ENCODE measurements at regions of chr20 and their contacts with region 1.

Region 1: DNA sequence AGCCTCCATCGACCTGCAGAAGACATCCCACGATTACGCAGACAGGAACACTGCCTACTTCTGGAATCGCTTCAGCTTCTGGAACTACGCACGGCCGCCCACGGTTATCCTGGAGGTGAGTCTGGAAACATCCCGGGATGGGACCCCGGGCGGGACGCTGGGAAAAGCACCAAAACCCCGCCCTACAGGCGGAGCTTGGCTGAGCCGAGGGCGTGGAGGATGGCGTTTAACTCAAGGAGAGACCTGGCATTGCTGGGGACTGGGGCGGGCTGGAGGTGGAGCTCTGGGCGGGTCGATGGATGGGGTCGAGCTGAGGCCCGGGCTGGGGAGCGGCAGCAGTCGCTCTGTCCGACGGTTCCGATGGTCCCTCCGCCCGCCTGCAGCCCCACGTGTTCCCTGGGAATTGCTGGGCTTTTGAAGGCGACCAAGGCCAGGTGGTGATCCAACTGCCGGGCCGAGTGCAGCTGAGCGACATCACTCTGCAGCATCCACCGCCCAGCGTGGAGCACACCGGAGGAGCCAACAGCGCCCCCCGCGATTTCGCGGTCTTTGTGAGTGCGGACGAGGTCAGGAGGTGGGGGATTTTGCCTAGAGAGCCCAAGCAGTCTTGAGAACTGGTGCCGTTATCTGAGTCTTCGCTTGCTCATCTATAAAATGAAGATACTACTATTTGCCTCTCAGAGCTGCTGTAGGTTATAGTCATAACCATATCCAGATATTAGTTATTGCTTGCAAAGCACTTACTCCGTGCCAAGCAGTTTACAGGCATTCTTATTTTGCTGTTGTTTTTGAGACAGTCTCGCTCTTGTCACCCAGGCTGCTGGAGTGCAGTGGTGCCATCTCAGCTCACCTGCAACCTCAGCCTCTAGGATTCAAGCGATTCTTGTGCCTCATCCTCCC is 3.8 kb downstream of the SPAG4 start:
- DNase-seq: peak in 1 of 4 experiments; percentile 41
- ATAC-seq: no peak
- H3K4me3 ChIP-seq: no peak overlapping the region
- H3K27ac ChIP-seq: no peak overlapping the region
- H3K4me1 ChIP-seq: peaks cover 7 to 39% of the 10 kb centered on the region in 2 experiments; a peak in 4 of 5 replicates
- H3K27me3 ChIP-seq: no peaks in the 10 kb centered on the region
- CTCF ChIP-seq: peak; percentile 20 to 41 (median 31); a peak in 3 of 6 replicates
- EP300 ChIP-seq: no peak
- POLR2A ChIP-seq: no peak
- RAD21 ChIP-seq: no peak

Region 2: GRCh38 chr20:35092524-35093266 is 526.8 kb before region 1 on chr20 and contains the start of gene TRPC4AP:
- CTCF ChIA-PET with region 1: no interaction called
- POLR2A ChIA-PET with region 1: no interaction called
- in situ Hi-C with region 1: no loop called
- intact Hi-C with region 1: no loop called
- DNase-seq: peak; percentile 88 to 94 (median 88)
- ATAC-seq: peak; percentile 92
- H3K4me3 ChIP-seq: peak within 1 kb of the TSS; percentile 92
- H3K27ac ChIP-seq: peak within 1 kb of the TSS; percentile 93
- H3K4me1 ChIP-seq: peaks cover 15 to 18% of the 10 kb centered on the region in 2 experiments
- H3K27me3 ChIP-seq: no peaks in the 10 kb centered on the region
- CTCF ChIP-seq: peak; percentile 91 to 98 (median 96)
- EP300 ChIP-seq: peak; percentile 55
- POLR2A ChIP-seq: peak; percentile 88
- RAD21 ChIP-seq: peak; percentile 19 to 41; a peak in 1 of 4 replicates
- polyA plus RNA-seq, gene TRPC4AP: 2.3 to 3.6 TPM

Region 3: DNA sequence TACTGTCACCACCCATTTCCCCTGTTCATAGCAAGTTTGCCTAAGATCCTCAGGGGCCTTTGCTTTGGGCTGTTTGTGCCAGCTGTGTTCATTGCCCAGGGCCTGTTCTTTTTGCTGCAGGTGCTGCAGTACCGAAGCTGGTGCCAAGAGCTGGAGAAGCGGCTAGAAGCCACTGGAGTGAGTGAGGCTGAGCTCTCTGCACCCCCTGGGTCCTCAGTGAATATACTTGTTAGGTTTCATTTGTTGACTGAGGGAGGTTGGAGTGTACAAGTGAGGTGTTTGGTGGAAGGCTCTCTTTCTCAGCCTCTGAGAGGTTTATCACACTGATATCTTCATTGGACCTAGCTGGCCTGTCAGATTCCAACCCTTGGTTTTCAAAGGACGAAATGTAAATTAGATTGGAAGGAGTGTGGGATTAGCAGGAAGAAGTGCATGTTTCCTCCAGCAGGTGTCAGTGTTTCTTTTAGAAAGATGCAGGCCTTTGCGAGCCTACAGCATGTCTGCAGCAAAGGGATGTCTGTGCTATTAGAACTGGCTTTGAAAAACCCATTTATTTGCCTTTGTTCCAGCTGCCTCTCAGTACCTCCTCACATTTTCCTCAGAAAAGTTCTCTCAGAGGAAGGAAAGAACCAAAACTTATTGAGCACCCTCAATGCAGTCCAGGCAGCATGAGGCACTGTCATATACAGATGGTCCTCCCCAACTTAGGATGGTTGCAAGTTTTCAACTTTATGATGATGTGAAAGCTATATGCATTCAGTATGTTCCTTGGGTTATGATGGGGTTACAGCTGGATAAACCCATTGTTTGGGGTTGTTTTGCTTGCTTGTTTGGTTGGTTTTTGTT is 155.8 kb before region 1 on chr20:
- CTCF ChIA-PET with region 1: no interaction called
- POLR2A ChIA-PET with region 1: interaction called, 3 read pairs
- in situ Hi-C with region 1: no loop called
- intact Hi-C with region 1: loop called (anchors 10 kb)
- DNase-seq: peak; percentile 42 to 82 (median 56)
- ATAC-seq: peak; percentile 85
- H3K4me3 ChIP-seq: no peak overlapping the region
- H3K27ac ChIP-seq: 0 out of 3 replicates have a peak overlapping the region, but pooled peaks have one; percentile 8
- H3K4me1 ChIP-seq: peaks cover 19 to 20% of the 10 kb centered on the region in 2 experiments
- H3K27me3 ChIP-seq: no peaks in the 10 kb centered on the region
- CTCF ChIP-seq: peak; percentile 60 to 89 (median 78)
- EP300 ChIP-seq: no peak
- POLR2A ChIP-seq: no peak
- RAD21 ChIP-seq: peak; percentile 57 to 64

Region 4: DNA sequence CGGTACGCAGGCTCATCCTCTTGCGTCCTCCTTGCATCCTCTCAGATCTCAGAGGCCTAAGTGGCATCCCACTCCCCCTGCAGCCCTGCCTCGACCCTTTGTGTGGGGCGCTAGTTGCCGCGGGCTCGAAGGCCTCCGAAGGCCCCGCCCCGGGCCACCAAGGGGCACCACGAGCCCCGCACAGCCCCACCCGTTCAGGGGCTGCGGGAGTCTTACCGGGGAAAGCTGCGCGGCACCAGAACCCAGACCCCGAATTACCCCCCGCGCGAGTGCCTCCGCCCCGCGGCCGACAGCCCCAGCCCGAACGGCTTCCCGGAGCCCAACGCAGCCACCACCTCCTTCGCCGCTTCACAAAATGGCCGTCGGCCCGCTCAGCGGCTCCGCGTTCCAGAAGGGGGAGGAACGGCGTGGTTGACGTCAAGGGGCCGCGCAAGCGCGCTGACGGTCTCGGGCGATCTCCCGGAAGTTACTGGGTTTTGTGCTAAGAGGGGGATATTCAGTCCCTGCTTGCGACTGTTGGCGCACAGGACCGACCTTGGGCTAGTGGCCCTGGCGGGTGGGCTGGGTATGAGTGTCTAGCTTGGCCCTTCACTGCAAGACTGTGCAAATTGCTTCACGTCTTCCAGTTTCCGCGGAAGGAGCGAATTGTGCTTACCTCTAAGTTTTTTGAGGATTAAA is 45.2 kb after region 1 on chr20 and contains the starts of genes CPNE1 and RBM12:
- CTCF ChIA-PET with region 1: no interaction called
- POLR2A ChIA-PET with region 1: interaction called, 5 read pairs
- in situ Hi-C with region 1: no loop called
- intact Hi-C with region 1: loop called (anchors 5 kb)
- DNase-seq: peak; percentile 94 to 96 (median 96)
- ATAC-seq: peak; percentile 89
- H3K4me3 ChIP-seq: peak within 1 kb of the TSS; percentile 57
- H3K27ac ChIP-seq: peak within 1 kb of the TSS; percentile 98
- H3K4me1 ChIP-seq: peaks cover 17 to 24% of the 10 kb centered on the region in 2 experiments; a peak in 4 of 5 replicates
- H3K27me3 ChIP-seq: no peaks in the 10 kb centered on the region
- CTCF ChIP-seq: no peak
- EP300 ChIP-seq: no peak
- POLR2A ChIP-seq: peak; percentile 97
- RAD21 ChIP-seq: no peak
- polyA plus RNA-seq, gene CPNE1: 45.5 to 56.0 TPM
- polyA plus RNA-seq, gene RBM12: 5.0 to 10.0 TPM

Region 5: GRCh38 chr20:35699127-35699975 is 79.9 kb after region 1 on chr20 and contains the starts of genes NFS1 and ROMO1:
- CTCF ChIA-PET with region 1: no interaction called
- POLR2A ChIA-PET with region 1: interaction called, 6 read pairs
- in situ Hi-C with region 1: no loop called
- intact Hi-C with region 1: loop called (anchors 2 kb)
- DNase-seq: peak; percentile 90 to 97 (median 94)
- ATAC-seq: peak; percentile 94
- H3K4me3 ChIP-seq: peak within 1 kb of the TSS; percentile 96
- H3K27ac ChIP-seq: peak within 1 kb of the TSS; percentile 92
- H3K4me1 ChIP-seq: peaks cover 10 to 14% of the 10 kb centered on the region in 2 experiments; a peak in 4 of 5 replicates
- H3K27me3 ChIP-seq: no peaks in the 10 kb centered on the region
- CTCF ChIP-seq: peak; percentile 29 to 34 (median 32); a peak in 5 of 6 replicates
- EP300 ChIP-seq: no peak
- POLR2A ChIP-seq: peak; percentile 91
- RAD21 ChIP-seq: no peak
- polyA plus RNA-seq, gene NFS1: 11.5 to 13.9 TPM
- polyA plus RNA-seq, gene ROMO1: 635 to 741 TPM

Measured in K562 (cell line).